A673 (cell line): ENCODE measurements at regions of chr12 and their contacts with region 1.

Region 1: GRCh38 chr12:49388682-49389386 is 21.6 kb downstream of the SPATS2 start:
- DNase-seq: no peak
- H3K4me3 ChIP-seq: no peak overlapping the region
- H3K27ac ChIP-seq: no peak overlapping the region
- H3K4me1 ChIP-seq: no peaks in the 10 kb centered on the region
- H3K27me3 ChIP-seq: no peaks in the 10 kb centered on the region
- CTCF ChIP-seq: no peak

Region 2: DNA sequence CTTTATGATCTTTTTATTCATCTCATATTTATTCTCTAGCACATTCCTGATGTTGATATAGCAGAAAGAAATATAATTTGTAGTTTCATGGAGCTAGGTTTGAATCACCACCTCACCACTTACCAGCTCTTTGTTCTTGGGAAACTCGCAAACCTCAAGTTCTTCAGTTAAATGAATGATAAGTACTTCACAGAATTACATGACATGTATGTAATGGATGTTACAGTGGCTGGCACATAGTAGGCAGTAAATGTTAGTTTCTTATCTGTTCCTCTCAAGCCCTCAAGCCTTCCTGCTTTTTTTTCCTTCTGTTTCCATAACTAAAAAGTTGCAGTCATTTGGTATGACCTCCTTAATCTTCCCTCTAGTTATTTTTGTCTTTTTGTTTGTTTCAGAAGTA is 33.3 kb after region 1 on chr12:
- CTCF ChIA-PET with region 1: no interaction called
- POLR2A ChIA-PET with region 1: interaction called, 11 read pairs
- intact Hi-C with region 1: no loop called
- DNase-seq: no peak
- H3K4me3 ChIP-seq: no peak overlapping the region
- H3K27ac ChIP-seq: no peak overlapping the region
- H3K4me1 ChIP-seq: peaks cover 14% of the 10 kb centered on the region
- H3K27me3 ChIP-seq: no peaks in the 10 kb centered on the region
- CTCF ChIP-seq: no peak

Region 3: GRCh38 chr12:49451468-49452259 is 62.8 kb after region 1 on chr12:
- CTCF ChIA-PET with region 1: no interaction called
- POLR2A ChIA-PET with region 1: no interaction called
- intact Hi-C with region 1: no loop called
- DNase-seq: no peak
- H3K4me3 ChIP-seq: no peak overlapping the region
- H3K27ac ChIP-seq: no peak overlapping the region
- H3K4me1 ChIP-seq: no peaks in the 10 kb centered on the region
- H3K27me3 ChIP-seq: no peaks in the 10 kb centered on the region
- CTCF ChIP-seq: no peak

Region 4: DNA sequence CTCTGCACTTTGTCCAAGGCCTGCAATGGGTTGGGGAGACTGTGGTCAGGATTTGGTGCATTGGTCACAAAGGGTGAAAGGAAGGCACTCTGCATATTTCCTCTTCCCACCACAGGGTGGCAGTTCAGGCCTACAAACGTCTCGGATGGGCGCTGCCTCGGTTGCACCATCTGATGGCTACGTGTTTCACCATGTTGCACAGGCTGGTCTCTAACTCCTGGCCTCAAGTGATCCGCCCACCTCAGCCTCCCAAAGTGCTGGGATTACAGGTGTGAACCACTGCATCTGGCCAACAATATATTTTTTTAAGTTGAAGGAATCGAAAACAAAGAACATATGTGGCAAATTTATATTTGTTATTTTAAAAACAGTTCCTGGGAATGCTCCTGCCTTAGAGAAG is 387.6 kb after region 1 on chr12:
- CTCF ChIA-PET with region 1: no interaction called
- POLR2A ChIA-PET with region 1: no interaction called
- intact Hi-C with region 1: no loop called
- DNase-seq: peak; percentile 77
- H3K4me3 ChIP-seq: no peak overlapping the region
- H3K27ac ChIP-seq: no peak overlapping the region
- H3K4me1 ChIP-seq: peaks cover 5% of the 10 kb centered on the region
- H3K27me3 ChIP-seq: no peaks in the 10 kb centered on the region
- CTCF ChIP-seq: peak; percentile 83